Transverse colon (tissue), 4 donors: ENCODE measurements at regions of chr5 and their contacts with region 1.

Region 1: GRCh38 chr5:173925448-173926071 is 37.4 kb downstream of the CPEB4 start:
- DNase-seq: peak; percentile 55
- H3K4me3 ChIP-seq: no peak overlapping the region
- H3K27ac ChIP-seq: peak overlapping the region; percentile 46 to 72 (median 65)
- H3K4me1 ChIP-seq: peaks cover 27 to 60% (median 31%) of the 10 kb centered on the region in 4 donors
- H3K27me3 ChIP-seq: no peaks in the 10 kb centered on the region
- CTCF ChIP-seq: peak in 4 of 5 experiments; percentile 22 to 45 (median 38)
- EP300 ChIP-seq: no peak
- POLR2A ChIP-seq: no peak

Region 2: DNA sequence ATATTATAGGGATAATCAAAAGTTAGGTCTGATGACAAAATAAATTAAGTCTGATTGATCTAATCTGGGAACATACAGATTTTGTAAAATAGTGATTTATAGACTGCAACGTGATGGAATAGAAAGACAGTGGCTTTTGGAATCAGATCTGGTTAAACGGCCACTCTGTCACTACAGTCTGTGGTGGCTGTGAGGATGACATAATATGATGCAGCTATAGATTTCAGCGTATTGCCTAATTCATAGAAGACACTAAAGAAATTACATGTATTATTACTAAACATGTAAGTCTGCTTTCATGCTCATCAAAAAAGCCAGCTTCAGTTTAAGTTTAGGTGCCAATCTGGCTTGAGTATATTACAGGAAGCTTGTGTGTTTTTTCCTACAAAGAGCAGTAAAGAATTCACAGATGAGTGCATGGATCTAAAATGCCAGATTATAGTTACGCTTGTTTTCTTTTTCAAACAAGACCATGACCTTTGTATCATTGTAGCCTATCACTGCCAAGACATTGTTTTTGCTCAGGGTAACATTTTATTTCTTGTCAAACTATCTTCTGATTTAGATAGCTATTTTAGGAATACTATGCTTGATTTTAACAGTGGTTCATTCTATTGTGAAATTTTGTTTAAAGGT is 11.8 kb before region 1 on chr5:
- in situ Hi-C with region 1: no loop called
- intact Hi-C with region 1: loop called (anchors 1 kb)
- DNase-seq: no peak
- H3K4me3 ChIP-seq: no peak overlapping the region
- H3K27ac ChIP-seq: peak overlapping the region; percentile 0 to 28 (median 26)
- H3K4me1 ChIP-seq: peaks cover 7 to 35% (median 19%) of the 10 kb centered on the region in 4 donors
- H3K27me3 ChIP-seq: no peaks in the 10 kb centered on the region
- CTCF ChIP-seq: no peak
- EP300 ChIP-seq: no peak
- POLR2A ChIP-seq: no peak

Region 3: DNA sequence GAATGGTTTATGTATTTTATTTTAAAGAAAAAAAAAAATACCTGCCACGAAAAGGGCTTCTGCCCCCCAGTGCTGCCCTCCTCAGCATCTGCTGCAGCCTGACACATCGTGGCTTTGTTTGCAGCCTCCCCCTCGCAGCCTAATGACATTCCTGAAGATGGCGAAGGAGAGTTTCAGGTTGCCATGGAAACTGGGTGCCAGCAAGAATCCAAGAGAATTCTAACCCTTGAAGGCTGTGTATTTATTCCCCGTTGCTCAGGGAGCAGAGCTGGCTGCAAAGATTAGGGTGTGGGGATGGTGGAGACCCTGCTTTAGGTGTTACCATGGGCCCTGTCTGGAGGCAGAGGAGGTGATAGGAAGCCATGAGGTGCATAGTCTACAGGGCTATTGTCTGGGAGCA is 246.6 kb after region 1 on chr5:
- in situ Hi-C with region 1: no loop called
- intact Hi-C with region 1: no loop called
- DNase-seq: no peak
- H3K4me3 ChIP-seq: no peak overlapping the region
- H3K27ac ChIP-seq: no peak overlapping the region
- H3K4me1 ChIP-seq: no peaks in the 10 kb centered on the region
- H3K27me3 ChIP-seq: no peaks in the 10 kb centered on the region
- CTCF ChIP-seq: no peak
- EP300 ChIP-seq: no peak
- POLR2A ChIP-seq: no peak

Region 4: GRCh38 chr5:174188295-174188694 is 262.7 kb after region 1 on chr5:
- in situ Hi-C with region 1: no loop called
- intact Hi-C with region 1: no loop called
- DNase-seq: no peak
- H3K4me3 ChIP-seq: no peak overlapping the region
- H3K27ac ChIP-seq: no peak overlapping the region
- H3K4me1 ChIP-seq: no peaks in the 10 kb centered on the region
- H3K27me3 ChIP-seq: no peaks in the 10 kb centered on the region
- CTCF ChIP-seq: no peak
- EP300 ChIP-seq: no peak
- POLR2A ChIP-seq: no peak